ENCODE measurements at regions of chr2 and their contacts with region 1.

Region 1: DNA sequence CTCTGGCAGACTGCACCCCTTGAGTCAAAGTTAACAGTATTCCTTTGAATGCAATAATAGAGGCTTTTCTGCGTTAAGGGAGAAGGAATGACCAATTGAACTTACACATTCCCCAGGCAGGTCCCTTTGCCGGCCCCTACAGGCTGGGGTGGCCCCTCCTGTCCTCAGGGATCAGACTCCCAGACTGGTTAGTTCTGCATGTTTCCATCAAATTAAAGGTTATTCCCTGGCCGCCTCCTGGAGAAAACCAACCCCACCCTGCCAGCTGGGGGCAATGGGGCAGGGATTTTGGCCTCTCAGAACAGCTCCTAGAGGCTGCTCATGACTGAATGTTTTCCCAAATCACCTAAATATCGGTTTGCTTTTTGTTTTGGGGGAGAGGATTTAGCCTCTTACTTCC is 199.6 kb downstream of the MGAT5 start:
- DNase-seq: no peak
- ATAC-seq: no peak
- H3K4me3 Mint-ChIP-seq: no peak overlapping the region
- H3K27ac Mint-ChIP-seq: no peak overlapping the region
- H3K4me1 Mint-ChIP-seq: no peaks in the 10 kb centered on the region
- H3K27me3 Mint-ChIP-seq: no peaks in the 10 kb centered on the region
- CTCF ChIP-seq: no peak

Region 2: GRCh38 chr2:133886735-133887660 is 566.5 kb before region 1 on chr2:
- CTCF ChIA-PET with region 1: interaction called, 24 read pairs
- POLR2A ChIA-PET with region 1: no interaction called
- intact Hi-C with region 1: loop called (anchors 1 kb)
- DNase-seq: peak; percentile 36
- ATAC-seq: peak; percentile 70
- H3K4me3 Mint-ChIP-seq: no peak overlapping the region
- H3K27ac Mint-ChIP-seq: no peak overlapping the region
- H3K4me1 Mint-ChIP-seq: peaks cover 10% of the 10 kb centered on the region
- H3K27me3 Mint-ChIP-seq: peaks cover 7% of the 10 kb centered on the region
- CTCF ChIP-seq: no peak

Region 3: DNA sequence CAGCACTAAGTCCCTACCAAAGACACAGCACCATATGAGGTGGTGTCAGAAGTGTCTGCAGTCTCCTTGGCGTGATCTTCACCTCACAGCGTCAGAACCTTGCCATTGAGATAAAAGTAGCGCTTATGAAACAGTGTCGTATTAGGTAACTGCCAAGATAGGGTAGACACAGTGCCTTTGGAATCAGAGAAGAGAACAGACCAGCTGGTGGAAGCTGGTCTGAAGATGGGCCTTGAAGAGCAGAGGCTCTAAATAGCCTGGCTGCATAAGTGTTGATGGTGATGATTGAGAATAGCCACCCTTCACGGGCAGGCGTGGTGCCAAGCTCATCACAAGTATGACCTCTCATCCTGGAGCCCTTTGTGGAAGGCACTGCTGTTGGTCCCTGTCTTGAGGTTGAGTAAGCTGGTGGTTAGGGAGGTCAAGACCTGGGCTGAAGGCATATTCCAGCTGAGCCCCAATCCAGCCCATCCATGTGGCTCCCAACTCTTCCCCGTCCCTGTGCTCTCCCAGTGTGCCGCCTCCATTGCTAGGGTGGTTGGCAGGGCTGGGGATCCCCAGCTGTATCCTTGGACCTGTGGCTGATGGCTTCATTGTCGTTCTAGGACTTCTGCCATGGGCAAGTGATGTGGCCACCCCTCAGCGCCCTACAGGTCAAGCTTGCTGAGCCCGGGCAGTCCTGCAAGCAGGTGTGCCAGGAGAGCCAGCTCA is 12.2 kb before region 1 on chr2:
- CTCF ChIA-PET with region 1: interaction called, 14 read pairs
- POLR2A ChIA-PET with region 1: no interaction called
- intact Hi-C with region 1: no loop called
- DNase-seq: no peak
- ATAC-seq: no peak
- H3K4me3 Mint-ChIP-seq: no peak overlapping the region
- H3K27ac Mint-ChIP-seq: peak overlapping the region; percentile 69
- H3K4me1 Mint-ChIP-seq: no peaks in the 10 kb centered on the region
- H3K27me3 Mint-ChIP-seq: no peaks in the 10 kb centered on the region
- CTCF ChIP-seq: no peak

Region 4: DNA sequence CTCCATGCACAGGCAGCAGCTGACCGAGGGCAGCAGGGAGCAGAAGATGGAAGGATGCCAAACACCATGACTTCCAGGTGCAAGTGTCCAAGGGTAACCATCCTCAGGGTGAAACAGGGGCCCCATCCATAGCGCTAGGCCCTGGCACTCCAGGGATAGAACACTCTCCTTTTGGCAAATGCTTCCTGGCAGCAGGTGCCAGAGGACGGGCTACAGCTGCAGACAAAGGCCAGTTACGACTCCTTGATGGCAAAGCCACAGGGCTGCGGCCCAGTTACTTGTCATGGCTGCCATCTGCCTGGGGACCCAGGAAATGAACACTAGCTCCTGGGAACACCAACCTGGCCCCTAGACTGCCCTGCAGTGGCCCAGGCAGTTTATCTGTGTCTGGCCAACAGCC is 86.5 kb after region 1 on chr2:
- CTCF ChIA-PET with region 1: no interaction called
- POLR2A ChIA-PET with region 1: no interaction called
- intact Hi-C with region 1: no loop called
- DNase-seq: no peak
- ATAC-seq: no peak
- H3K4me3 Mint-ChIP-seq: no peak overlapping the region
- H3K27ac Mint-ChIP-seq: no peak overlapping the region
- H3K4me1 Mint-ChIP-seq: no peaks in the 10 kb centered on the region
- H3K27me3 Mint-ChIP-seq: no peaks in the 10 kb centered on the region
- CTCF ChIP-seq: no peak

Region 5: DNA sequence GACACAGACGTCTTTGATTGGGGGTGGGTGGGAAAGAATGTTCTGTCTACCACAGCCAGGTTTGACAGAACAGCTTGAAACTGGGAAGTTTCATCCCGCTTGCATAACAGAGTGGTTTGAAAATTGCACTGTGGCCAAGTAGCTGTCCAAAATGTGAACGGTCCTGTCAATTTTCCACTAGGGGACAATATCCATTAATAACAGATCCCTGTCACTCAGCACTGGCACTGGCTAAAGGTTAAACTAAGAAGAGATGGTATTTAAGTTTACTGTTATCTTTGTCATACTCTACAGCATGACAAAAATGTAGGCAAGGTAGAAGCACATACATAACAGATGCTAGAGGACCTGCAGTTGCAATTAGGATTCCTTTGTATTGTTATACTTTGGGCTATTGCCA is 329.3 kb after region 1 on chr2:
- CTCF ChIA-PET with region 1: interaction called, 4 read pairs
- POLR2A ChIA-PET with region 1: no interaction called
- intact Hi-C with region 1: loop called (anchors 2 kb)
- DNase-seq: no peak
- ATAC-seq: peak; percentile 66
- H3K4me3 Mint-ChIP-seq: no peak overlapping the region
- H3K27ac Mint-ChIP-seq: no peak overlapping the region
- H3K4me1 Mint-ChIP-seq: peaks cover 8% of the 10 kb centered on the region
- H3K27me3 Mint-ChIP-seq: no peaks in the 10 kb centered on the region
- CTCF ChIP-seq: peak; percentile 47

Region 6: DNA sequence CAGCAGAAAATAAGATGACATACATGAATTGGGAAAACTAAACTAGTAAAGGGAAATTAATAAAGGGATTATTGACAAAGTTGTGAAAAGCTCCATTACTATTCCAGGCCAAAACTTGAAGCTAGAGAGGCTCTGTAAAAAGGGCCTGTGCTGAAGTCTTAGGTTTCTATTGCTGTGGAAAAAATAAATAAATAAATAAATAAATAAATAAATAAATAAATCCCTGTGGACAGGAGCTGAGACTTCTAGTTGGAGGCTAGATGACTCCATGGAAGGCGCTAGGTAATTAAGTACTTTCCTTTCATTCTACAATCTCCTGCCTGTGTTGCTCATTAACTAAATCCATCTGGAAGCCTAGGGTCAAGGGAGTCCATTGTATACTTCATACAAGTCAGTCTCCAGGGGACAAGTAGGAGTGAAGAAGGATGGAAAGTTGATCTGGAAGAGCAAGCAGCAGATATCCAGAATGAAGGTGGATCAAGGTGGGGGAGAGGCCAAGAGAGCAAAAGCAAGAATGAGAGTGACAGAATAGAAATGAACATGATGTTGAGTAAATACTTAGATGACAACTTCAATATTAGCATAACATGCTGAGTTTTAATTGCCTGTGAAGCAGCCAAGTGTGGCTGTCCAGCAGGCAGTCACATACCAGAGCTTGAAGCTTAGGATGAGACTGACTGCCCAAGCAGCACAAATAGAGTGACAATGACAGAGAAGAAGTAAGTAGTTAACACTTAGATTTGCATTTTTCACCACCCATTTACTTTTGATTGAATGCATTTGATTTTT is 439.0 kb after region 1 on chr2:
- CTCF ChIA-PET with region 1: interaction called, 12 read pairs
- POLR2A ChIA-PET with region 1: no interaction called
- intact Hi-C with region 1: no loop called
- DNase-seq: no peak
- ATAC-seq: no peak
- H3K4me3 Mint-ChIP-seq: no peak overlapping the region
- H3K27ac Mint-ChIP-seq: no peak overlapping the region
- H3K4me1 Mint-ChIP-seq: no peaks in the 10 kb centered on the region
- H3K27me3 Mint-ChIP-seq: no peaks in the 10 kb centered on the region
- CTCF ChIP-seq: no peak